PC-9 (cell line): ENCODE measurements at regions of chr4 and their contacts with region 1.

Region 1: DNA sequence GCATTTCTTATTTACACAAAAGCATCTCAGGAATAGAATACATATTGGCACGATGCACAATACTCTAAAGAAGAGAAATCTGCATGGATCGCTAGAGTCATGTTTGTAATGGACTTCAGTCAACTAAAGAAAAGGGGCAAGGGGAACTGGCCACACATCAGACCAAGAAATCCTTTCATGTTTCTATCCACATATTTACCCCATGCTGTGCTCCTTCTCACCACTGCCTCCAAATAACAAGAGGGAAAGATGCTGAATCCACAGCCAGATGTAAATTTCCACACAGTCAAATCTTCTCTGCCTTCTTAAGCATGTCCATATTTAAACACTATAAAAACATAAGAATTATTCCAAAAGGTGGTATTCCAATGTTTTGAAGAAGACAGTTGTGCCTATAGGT is 67.6 kb downstream of the COX18 start:
- DNase-seq: no peak
- H3K4me3 ChIP-seq: no peak overlapping the region
- H3K27ac ChIP-seq: no peak overlapping the region
- H3K4me1 ChIP-seq: no peaks in the 10 kb centered on the region
- H3K27me3 ChIP-seq: no peaks in the 10 kb centered on the region
- CTCF ChIP-seq: no peak

Region 2: DNA sequence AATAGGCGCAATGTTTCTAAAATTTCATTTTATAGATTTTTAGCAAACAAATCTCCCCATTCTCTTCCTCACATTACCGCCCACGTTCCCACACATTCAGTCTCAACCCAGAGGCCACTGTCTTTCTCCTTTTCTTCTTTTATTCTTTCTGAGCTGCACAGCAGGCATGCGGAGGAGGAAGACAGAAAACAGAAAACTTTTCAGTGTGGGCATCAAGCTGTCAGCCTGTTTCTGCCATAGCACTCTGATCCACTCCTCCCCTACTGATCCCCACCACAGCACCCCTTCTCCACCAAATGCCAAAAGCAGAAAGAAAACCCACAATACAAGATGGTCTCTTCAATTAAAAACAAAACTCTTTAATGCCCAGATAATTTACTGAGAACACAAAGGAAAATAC is 338.0 kb before region 1 on chr4:
- CTCF ChIA-PET with region 1: no interaction called
- POLR2A ChIA-PET with region 1: no interaction called
- intact Hi-C with region 1: loop called (anchors 5 kb)
- DNase-seq: no peak
- H3K4me3 ChIP-seq: no peak overlapping the region
- H3K27ac ChIP-seq: no peak overlapping the region
- H3K4me1 ChIP-seq: no peaks in the 10 kb centered on the region
- H3K27me3 ChIP-seq: no peaks in the 10 kb centered on the region
- CTCF ChIP-seq: no peak

Region 3: DNA sequence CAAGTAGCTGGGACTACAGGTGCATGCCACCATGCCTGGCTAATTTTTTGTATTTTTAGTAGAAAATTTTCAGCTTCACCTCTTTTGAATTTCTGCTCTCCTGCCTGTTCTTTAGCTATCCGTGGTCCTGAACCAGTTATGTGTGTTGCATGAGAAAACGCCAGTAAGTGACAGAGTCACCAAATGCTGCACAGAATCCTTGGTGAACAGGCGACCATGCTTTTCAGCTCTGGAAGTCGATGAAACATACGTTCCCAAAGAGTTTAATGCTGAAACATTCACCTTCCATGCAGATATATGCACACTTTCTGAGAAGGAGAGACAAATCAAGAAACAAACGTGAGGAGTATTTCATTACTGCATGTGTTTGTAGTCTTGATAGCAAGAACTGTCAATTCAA is 416.1 kb after region 1 on chr4:
- CTCF ChIA-PET with region 1: no interaction called
- POLR2A ChIA-PET with region 1: no interaction called
- intact Hi-C with region 1: no loop called
- DNase-seq: no peak
- H3K4me3 ChIP-seq: no peak overlapping the region
- H3K27ac ChIP-seq: no peak overlapping the region
- H3K4me1 ChIP-seq: no peaks in the 10 kb centered on the region
- H3K27me3 ChIP-seq: no peaks in the 10 kb centered on the region
- CTCF ChIP-seq: no peak